Natural killer cell (primary cell): ENCODE measurements at regions of chr6 and their contacts with region 1.

Region 1: DNA sequence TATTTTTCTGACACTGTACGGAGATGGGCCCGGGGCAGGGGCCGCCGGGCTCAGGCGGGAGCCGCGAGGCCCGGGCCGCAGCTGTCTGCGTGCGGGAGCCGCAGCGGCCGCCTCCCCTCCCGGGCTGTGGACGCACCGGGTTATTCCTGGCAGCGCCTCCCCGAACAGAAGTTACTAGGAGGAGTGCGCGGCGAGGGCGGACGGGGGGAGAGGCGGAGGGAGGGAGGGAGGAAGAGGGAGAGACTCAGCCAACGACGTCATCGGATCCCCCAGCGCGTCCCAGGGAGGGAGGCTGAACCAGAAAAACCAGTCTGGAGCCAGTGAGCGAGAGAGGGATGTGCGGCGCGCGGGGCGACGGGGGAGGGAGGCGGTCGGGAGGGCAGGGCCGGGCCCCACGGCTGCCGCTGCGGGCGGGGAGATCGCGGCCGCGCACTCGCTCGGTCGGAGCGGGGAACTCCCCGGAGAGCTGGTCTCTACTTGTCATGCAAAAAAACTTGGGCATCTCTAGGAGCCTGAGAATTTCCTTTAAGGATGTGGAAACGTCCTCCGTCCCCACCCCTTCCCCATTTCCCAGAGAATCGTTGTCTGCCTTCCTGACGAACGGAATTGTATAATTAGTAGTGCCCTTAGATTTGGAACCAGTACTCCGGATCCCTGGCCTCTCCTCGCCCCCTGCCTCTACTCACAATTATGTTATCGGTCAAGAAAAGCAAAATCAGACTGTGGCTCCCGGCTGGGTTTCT is 1.4 kb upstream of the HIVEP2 start:
- DNase-seq: peak; percentile 84 to 97
- ATAC-seq: peak; percentile 40 to 65 (median 52)
- H3K4me3 ChIP-seq: peak overlapping the region; percentile 93
- H3K4me3 Mint-ChIP-seq: peak overlapping the region; percentile 91
- H3K27ac ChIP-seq: peak overlapping the region; percentile 95
- H3K27ac Mint-ChIP-seq: peak overlapping the region; percentile 99
- H3K4me1 ChIP-seq: peaks cover 15% of the 10 kb centered on the region
- H3K4me1 Mint-ChIP-seq: peaks cover 40 to 41% of the 10 kb centered on the region in 2 donors
- H3K27me3 ChIP-seq: no peaks in the 10 kb centered on the region
- H3K27me3 Mint-ChIP-seq: no peaks in the 10 kb centered on the region
- CTCF ChIP-seq: no peak

Region 2: GRCh38 chr6:142692942-142693341 is 253.4 kb before region 1 on chr6:
- intact Hi-C with region 1: loop called (anchors 10 kb)
- DNase-seq: peak; percentile 55 to 84
- ATAC-seq: peak; percentile 82 to 94 (median 85)
- H3K4me3 ChIP-seq: no peak overlapping the region
- H3K4me3 Mint-ChIP-seq: no peak overlapping the region
- H3K27ac ChIP-seq: no peak overlapping the region
- H3K27ac Mint-ChIP-seq: no peak overlapping the region
- H3K4me1 ChIP-seq: no peaks in the 10 kb centered on the region
- H3K4me1 Mint-ChIP-seq: peaks cover 0 to 5% of the 10 kb centered on the region in 2 donors
- H3K27me3 ChIP-seq: no peaks in the 10 kb centered on the region
- H3K27me3 Mint-ChIP-seq: peaks cover 0 to 5% of the 10 kb centered on the region in 2 donors
- CTCF ChIP-seq: peak; percentile 95

Region 3: GRCh38 chr6:142819603-142820337 is 126.6 kb before region 1 on chr6:
- intact Hi-C with region 1: loop called (anchors 1 kb)
- DNase-seq: peak in 1 of 2 donors; percentile 80
- ATAC-seq: peak; percentile 82 to 90 (median 83)
- H3K4me3 ChIP-seq: peak overlapping the region; percentile 31
- H3K4me3 Mint-ChIP-seq: peak overlapping the region; percentile 95
- H3K27ac ChIP-seq: peak overlapping the region; percentile 78
- H3K27ac Mint-ChIP-seq: peak overlapping the region; percentile 92 to 97
- H3K4me1 ChIP-seq: peaks cover 14% of the 10 kb centered on the region
- H3K4me1 Mint-ChIP-seq: peaks cover 27 to 52% of the 10 kb centered on the region in 2 donors
- H3K27me3 ChIP-seq: no peaks in the 10 kb centered on the region
- H3K27me3 Mint-ChIP-seq: no peaks in the 10 kb centered on the region
- CTCF ChIP-seq: no peak

Region 4: GRCh38 chr6:142902636-142903053 is 43.7 kb before region 1 on chr6:
- intact Hi-C with region 1: loop called (anchors 1 kb)
- DNase-seq: peak; percentile 80 to 93
- ATAC-seq: peak; percentile 89 to 98 (median 90)
- H3K4me3 ChIP-seq: no peak overlapping the region
- H3K4me3 Mint-ChIP-seq: peak overlapping the region; percentile 86
- H3K27ac ChIP-seq: peak overlapping the region; percentile 87
- H3K27ac Mint-ChIP-seq: peak overlapping the region; percentile 93 to 98
- H3K4me1 ChIP-seq: peaks cover 14% of the 10 kb centered on the region
- H3K4me1 Mint-ChIP-seq: peaks cover 40 to 43% of the 10 kb centered on the region in 2 donors
- H3K27me3 ChIP-seq: no peaks in the 10 kb centered on the region
- H3K27me3 Mint-ChIP-seq: no peaks in the 10 kb centered on the region
- CTCF ChIP-seq: no peak

Region 5: GRCh38 chr6:142926494-142927270 is 19.7 kb before region 1 on chr6:
- intact Hi-C with region 1: loop called (anchors 1 kb)
- DNase-seq: peak; percentile 76 to 90
- ATAC-seq: peak; percentile 83 to 93 (median 89)
- H3K4me3 ChIP-seq: peak overlapping the region; percentile 93
- H3K4me3 Mint-ChIP-seq: peak overlapping the region; percentile 95
- H3K27ac ChIP-seq: peak overlapping the region; percentile 100
- H3K27ac Mint-ChIP-seq: peak overlapping the region; percentile 94 to 95
- H3K4me1 ChIP-seq: peaks cover 6% of the 10 kb centered on the region
- H3K4me1 Mint-ChIP-seq: peaks cover 34% of the 10 kb centered on the region in 2 donors
- H3K27me3 ChIP-seq: no peaks in the 10 kb centered on the region
- H3K27me3 Mint-ChIP-seq: no peaks in the 10 kb centered on the region
- CTCF ChIP-seq: no peak

Region 6: GRCh38 chr6:144349690-144350527 is 1403.6 kb after region 1 on chr6:
- intact Hi-C with region 1: loop called (anchors 10 kb)
- DNase-seq: peak in 1 of 2 donors; percentile 60
- ATAC-seq: peak; percentile 32 to 62 (median 32)
- H3K4me3 ChIP-seq: peak overlapping the region; percentile 17
- H3K4me3 Mint-ChIP-seq: peak overlapping the region; percentile 92
- H3K27ac ChIP-seq: peak overlapping the region; percentile 87
- H3K27ac Mint-ChIP-seq: peak overlapping the region; percentile 90 to 99
- H3K4me1 ChIP-seq: peaks cover 83% of the 10 kb centered on the region
- H3K4me1 Mint-ChIP-seq: peaks cover 81 to 90% of the 10 kb centered on the region in 2 donors
- H3K27me3 ChIP-seq: no peaks in the 10 kb centered on the region
- H3K27me3 Mint-ChIP-seq: no peaks in the 10 kb centered on the region
- CTCF ChIP-seq: no peak